ENCODE measurements at regions of chr19 and their contacts with region 1.

Region 1: GRCh38 chr19:29528350-29528945 is 2.7 kb downstream of the VSTM2B start:
- DNase-seq: peak; percentile 75 to 91
- H3K4me3 ChIP-seq: peak overlapping the region; percentile 21 to 65 (median 54); a peak in 7 of 8 replicates
- H3K27ac ChIP-seq: no peak overlapping the region
- H3K4me1 ChIP-seq: peaks cover 6 to 45% (median 12%) of the 10 kb centered on the region in 4 experiments; a peak in 6 of 7 replicates
- H3K27me3 ChIP-seq: peaks cover 47 to 83% (median 75%) of the 10 kb centered on the region in 4 experiments
- CTCF ChIP-seq: peak; percentile 72 to 82 (median 76)
- EP300 ChIP-seq: no peak
- POLR2A ChIP-seq: no peak
- RAD21 ChIP-seq: peak; percentile 87 to 89

Region 2: GRCh38 chr19:29263305-29264135 is 264.9 kb before region 1 on chr19:
- CTCF ChIA-PET with region 1: interaction called, 21 read pairs
- POLR2A ChIA-PET with region 1: no interaction called
- DNase-seq: peak in 1 of 2 experiments; percentile 91
- H3K4me3 ChIP-seq: no peak overlapping the region
- H3K27ac ChIP-seq: no peak overlapping the region
- H3K4me1 ChIP-seq: peaks cover 0 to 3% (median 0%) of the 10 kb centered on the region in 4 experiments; a peak in 4 of 7 replicates
- H3K27me3 ChIP-seq: no peaks in the 10 kb centered on the region; a peak in 2 of 7 replicates
- CTCF ChIP-seq: peak; percentile 75 to 86 (median 85)
- EP300 ChIP-seq: no peak
- POLR2A ChIP-seq: no peak
- RAD21 ChIP-seq: peak; percentile 76 to 80

Region 3: GRCh38 chr19:29415507-29415906 is 112.9 kb before region 1 on chr19:
- CTCF ChIA-PET with region 1: interaction called, 12 read pairs
- POLR2A ChIA-PET with region 1: no interaction called
- DNase-seq: peak in 1 of 2 experiments; percentile 54
- H3K4me3 ChIP-seq: no peak overlapping the region
- H3K27ac ChIP-seq: no peak overlapping the region
- H3K4me1 ChIP-seq: no peaks in the 10 kb centered on the region
- H3K27me3 ChIP-seq: no peaks in the 10 kb centered on the region
- CTCF ChIP-seq: peak; percentile 65 to 75 (median 66)
- EP300 ChIP-seq: no peak
- POLR2A ChIP-seq: no peak
- RAD21 ChIP-seq: peak; percentile 47 to 64

Region 4: GRCh38 chr19:29446361-29446760 is 82.1 kb before region 1 on chr19:
- CTCF ChIA-PET with region 1: no interaction called
- POLR2A ChIA-PET with region 1: no interaction called
- DNase-seq: peak in 1 of 2 experiments; percentile 13
- H3K4me3 ChIP-seq: no peak overlapping the region
- H3K27ac ChIP-seq: no peak overlapping the region
- H3K4me1 ChIP-seq: no peaks in the 10 kb centered on the region
- H3K27me3 ChIP-seq: no peaks in the 10 kb centered on the region
- CTCF ChIP-seq: no peak
- EP300 ChIP-seq: no peak
- POLR2A ChIP-seq: no peak
- RAD21 ChIP-seq: no peak

Region 5: DNA sequence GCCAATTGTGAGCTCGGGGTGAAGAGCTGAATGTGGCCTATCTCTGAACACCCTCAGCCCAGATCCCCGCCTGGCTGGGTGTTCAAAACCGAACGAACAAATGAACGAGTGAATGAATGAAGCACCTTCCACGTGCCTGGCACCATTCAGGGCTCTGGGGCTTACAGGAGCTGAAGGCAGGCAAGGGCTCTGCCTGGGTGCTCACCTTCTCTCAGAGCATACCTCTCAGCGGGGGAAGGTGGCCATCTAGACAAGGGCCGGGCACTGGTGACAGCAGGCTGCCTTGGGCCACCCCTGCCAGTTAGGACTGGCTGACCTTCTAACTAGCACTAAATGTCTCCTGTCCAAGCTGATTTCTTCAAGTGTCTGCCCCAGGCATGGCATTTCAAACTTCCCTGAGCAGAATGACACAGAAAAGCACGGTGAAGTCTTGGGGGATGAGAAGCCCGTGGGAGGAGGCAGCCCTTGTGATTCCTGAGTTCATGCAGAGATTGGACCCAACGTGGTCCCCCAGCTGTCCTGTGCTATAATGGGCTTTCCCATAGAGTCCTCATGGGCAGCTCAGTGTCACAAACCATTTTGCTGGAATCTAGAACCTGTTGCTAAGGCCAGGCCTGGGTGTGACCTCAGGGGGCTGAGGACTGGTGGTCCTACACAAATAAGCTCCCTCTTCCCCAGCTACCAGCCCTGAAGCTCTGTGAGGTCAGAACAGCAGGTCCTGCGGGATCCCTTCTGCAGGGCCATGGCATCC is 30.6 kb before region 1 on chr19:
- CTCF ChIA-PET with region 1: interaction called, 14 read pairs
- POLR2A ChIA-PET with region 1: no interaction called
- DNase-seq: no peak
- H3K4me3 ChIP-seq: no peak overlapping the region
- H3K27ac ChIP-seq: no peak overlapping the region
- H3K4me1 ChIP-seq: peaks cover 2 to 4% (median 2%) of the 10 kb centered on the region in 4 experiments; a peak in 4 of 7 replicates
- H3K27me3 ChIP-seq: no peaks in the 10 kb centered on the region
- CTCF ChIP-seq: no peak
- EP300 ChIP-seq: no peak
- POLR2A ChIP-seq: no peak
- RAD21 ChIP-seq: no peak

Region 6: DNA sequence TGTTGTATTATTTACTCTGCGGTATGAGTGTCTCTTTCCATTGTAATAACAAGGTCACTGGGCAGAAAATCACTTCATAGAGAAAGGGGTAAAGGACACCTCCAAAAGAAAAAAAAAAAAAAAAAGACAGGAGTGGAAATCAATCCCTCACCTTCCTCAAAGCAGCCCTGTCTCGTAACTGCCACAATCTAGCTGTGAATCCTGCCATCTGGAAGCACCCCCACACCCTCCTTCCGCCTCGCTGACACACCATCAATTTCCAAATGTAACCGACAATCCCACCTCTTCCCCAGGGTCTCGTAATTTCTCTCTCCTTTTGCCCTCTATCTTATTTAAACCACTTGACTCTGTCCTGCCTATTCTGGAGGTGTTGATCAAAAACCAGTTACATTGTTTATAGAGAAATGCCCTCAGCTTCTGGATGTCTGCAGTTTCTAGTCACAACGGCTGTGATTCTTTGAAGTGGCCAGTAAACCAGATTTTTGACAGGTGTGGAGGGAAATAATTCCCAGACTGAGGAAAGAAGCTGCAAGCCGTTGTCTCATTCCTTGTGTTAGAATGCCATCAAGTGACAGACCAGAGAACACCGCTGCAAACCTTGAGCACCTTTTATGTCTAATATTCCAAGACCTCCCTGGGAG is 68.6 kb after region 1 on chr19:
- CTCF ChIA-PET with region 1: interaction called, 42 read pairs
- POLR2A ChIA-PET with region 1: interaction called, 4 read pairs
- DNase-seq: no peak
- H3K4me3 ChIP-seq: no peak overlapping the region
- H3K27ac ChIP-seq: no peak overlapping the region
- H3K4me1 ChIP-seq: peaks cover 3 to 15% (median 13%) of the 10 kb centered on the region in 4 experiments; a peak in 6 of 7 replicates
- H3K27me3 ChIP-seq: peaks cover 0 to 2% (median 0%) of the 10 kb centered on the region in 4 experiments; a peak in 3 of 7 replicates
- CTCF ChIP-seq: peak; percentile 13 to 61 (median 58)
- EP300 ChIP-seq: no peak
- POLR2A ChIP-seq: no peak
- RAD21 ChIP-seq: peak; percentile 87

Measured in H1 (cell line).